ENCODE measurements at regions of chr3 and their contacts with region 1.

Region 1: DNA sequence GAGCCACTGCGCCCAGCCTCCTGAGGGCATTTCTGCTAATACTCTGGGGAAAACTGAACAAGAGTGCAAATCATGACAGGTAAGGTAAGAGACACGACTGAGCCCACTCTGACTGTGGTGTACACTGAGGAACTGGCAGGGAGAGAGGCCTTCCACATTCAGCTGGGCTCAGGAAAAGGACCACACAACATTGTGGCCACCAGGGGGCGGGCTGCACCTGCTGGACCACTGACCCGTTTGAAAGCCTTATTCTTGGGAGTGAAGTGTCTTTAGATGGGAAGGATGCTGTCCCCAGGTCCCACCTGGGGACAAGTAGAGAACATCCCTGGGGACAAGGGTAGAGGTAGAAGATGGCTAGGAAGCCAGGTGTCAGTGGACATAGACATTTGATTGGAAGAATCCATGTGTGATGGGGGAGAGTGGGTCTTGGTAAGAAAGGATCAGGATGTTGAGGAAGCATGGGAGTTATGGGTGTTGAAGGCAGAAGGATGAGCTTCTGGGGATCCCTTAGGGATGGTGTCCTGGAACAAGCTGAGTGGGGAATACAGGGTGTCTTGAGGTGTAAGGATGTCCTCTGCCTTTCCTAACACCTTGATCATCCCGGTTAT is 6.2 kb upstream of the CTDSPL start:
- DNase-seq: peak; percentile 88
- H3K4me3 Mint-ChIP-seq: no peak overlapping the region
- H3K27ac Mint-ChIP-seq: no peak overlapping the region
- H3K4me1 Mint-ChIP-seq: peaks cover 34% of the 10 kb centered on the region
- H3K27me3 Mint-ChIP-seq: no peaks in the 10 kb centered on the region
- CTCF ChIP-seq: peak; percentile 80

Region 2: GRCh38 chr3:37996785-37997301 is 141.4 kb after region 1 on chr3:
- CTCF ChIA-PET with region 1: interaction called, 10 read pairs
- intact Hi-C with region 1: no loop called
- DNase-seq: peak; percentile 86
- H3K4me3 Mint-ChIP-seq: no peak overlapping the region
- H3K27ac Mint-ChIP-seq: peak overlapping the region; percentile 60
- H3K4me1 Mint-ChIP-seq: peaks cover 38% of the 10 kb centered on the region
- H3K27me3 Mint-ChIP-seq: no peaks in the 10 kb centered on the region
- CTCF ChIP-seq: peak; percentile 87

Region 3: GRCh38 chr3:38327335-38328009 is 472.0 kb after region 1 on chr3:
- CTCF ChIA-PET with region 1: no interaction called
- intact Hi-C with region 1: no loop called
- DNase-seq: peak; percentile 30
- H3K4me3 Mint-ChIP-seq: no peak overlapping the region
- H3K27ac Mint-ChIP-seq: peak overlapping the region; percentile 31
- H3K4me1 Mint-ChIP-seq: peaks cover 16% of the 10 kb centered on the region
- H3K27me3 Mint-ChIP-seq: no peaks in the 10 kb centered on the region
- CTCF ChIP-seq: no peak

Measured in Calu3 (cell line).